Dorsolateral prefrontal cortex (tissue), 120 donors: ENCODE measurements at regions of chr2 and their contacts with region 1.

Region 1: DNA sequence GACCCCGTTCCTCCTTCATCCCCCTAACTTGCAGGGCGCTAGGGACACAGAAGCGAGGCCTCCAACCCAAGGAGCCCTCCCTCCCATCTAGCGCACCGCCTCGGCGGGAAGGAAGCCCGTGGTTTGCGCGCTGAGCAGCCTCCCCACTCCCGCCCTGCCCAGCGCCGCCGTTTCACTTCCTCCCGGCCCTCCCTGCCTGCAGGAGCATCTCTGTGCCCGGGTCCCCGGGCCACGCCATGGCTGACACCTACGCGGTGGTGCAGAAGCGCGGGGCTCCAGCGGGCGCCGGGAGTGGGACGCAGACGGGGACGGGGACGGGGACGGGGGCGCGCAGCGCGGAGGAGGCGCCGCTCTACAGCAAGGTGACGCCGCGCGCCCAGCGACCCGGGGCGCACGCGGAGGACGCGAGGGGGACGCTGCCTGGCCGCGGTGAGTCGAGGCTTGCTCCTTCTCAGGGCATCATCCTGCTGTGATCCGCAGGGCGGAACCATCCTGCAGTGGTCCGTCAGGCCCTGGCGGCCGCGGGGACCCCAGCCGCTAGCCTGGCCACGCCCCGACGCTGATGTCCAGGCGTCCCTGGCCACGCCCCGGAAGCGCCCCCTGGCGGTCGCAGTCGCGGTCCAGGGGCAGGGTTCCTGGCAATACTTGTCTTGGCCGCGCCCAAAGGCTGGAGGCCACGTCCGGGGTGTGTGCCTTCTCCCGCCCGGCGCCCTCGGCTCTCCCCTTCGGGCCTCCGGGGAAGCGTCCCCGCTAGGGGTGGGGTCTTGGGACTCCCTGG is 16.4 kb downstream of the PTPN18 start:
- DNase-seq: peak; percentile 75 to 91 (median 82)
- H3K4me3 ChIP-seq: peak overlapping the region; percentile 66 to 94 (median 87)
- H3K27ac ChIP-seq: peak overlapping the region; percentile 7 to 95 (median 85)
- H3K27me3 ChIP-seq: no peaks in the 10 kb centered on the region
- CTCF ChIP-seq: peak; percentile 75 to 97 (median 88)

Region 2: GRCh38 chr2:130332271-130333073 is 39.8 kb before region 1 on chr2:
- intact Hi-C with region 1: loop called in 1 of 2 experiments (anchors 2 kb)
- DNase-seq: peak in 9 of 10 donors; percentile 54 to 81 (median 70)
- H3K4me3 ChIP-seq: peak overlapping the region in 8 of 59 donors; percentile 3 to 31 (median 16)
- H3K27ac ChIP-seq: no peak overlapping the region
- H3K27me3 ChIP-seq: peaks cover 0 to 29% (median 2%) of the 10 kb centered on the region in 45 donors
- CTCF ChIP-seq: peak; percentile 78 to 98 (median 92)

Region 3: DNA sequence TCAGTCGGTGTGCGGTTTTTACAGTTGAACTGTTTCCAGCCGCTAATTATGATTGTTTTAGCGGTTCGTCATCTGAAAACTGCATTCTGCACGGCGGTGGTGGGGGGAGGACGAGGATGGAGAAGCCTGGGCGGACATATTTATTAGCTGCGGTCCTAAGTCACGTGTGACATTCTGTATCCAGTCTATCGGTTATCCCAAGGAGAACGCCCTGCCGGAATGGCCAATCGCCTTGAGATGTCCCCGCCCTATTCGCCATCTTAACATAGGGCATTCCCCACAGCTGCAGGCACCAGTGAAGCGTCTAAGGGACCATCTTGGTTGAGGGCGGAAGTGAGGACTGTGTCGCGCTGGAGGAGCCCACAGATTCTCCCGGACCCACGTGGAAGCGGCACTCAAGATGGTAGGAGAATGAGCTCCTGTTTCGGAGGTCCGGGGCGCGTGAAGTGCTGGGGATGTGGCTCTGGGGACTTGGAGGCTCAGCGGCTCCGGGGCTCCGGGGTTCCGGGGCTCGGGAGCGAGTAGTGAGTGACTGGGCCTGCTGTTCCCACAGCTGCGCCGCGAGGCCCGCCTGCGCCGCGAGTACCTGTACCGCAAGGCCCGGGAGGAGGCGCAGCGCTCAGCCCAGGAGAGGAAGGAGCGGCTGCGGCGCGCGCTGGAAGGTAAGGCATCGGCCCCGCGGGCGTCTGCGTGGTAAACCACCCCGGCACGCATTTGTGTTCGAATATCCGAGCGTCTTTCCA is 29.5 kb before region 1 on chr2 and contains the start of gene IMP4:
- intact Hi-C with region 1: loop called (anchors 1 to 2 kb)
- DNase-seq: peak; percentile 91 to 100 (median 99)
- H3K4me3 ChIP-seq: peak within 1 kb of the TSS; percentile 69 to 100 (median 94)
- H3K27ac ChIP-seq: peak within 1 kb of the TSS; percentile 72 to 99 (median 96)
- H3K27me3 ChIP-seq: no peaks in the 10 kb centered on the region
- CTCF ChIP-seq: peak in 36 of 56 donors; percentile 2 to 49 (median 24)
- total RNA-seq, gene IMP4: 46.3 to 91.5 (median 67.1) TPM

Region 4: DNA sequence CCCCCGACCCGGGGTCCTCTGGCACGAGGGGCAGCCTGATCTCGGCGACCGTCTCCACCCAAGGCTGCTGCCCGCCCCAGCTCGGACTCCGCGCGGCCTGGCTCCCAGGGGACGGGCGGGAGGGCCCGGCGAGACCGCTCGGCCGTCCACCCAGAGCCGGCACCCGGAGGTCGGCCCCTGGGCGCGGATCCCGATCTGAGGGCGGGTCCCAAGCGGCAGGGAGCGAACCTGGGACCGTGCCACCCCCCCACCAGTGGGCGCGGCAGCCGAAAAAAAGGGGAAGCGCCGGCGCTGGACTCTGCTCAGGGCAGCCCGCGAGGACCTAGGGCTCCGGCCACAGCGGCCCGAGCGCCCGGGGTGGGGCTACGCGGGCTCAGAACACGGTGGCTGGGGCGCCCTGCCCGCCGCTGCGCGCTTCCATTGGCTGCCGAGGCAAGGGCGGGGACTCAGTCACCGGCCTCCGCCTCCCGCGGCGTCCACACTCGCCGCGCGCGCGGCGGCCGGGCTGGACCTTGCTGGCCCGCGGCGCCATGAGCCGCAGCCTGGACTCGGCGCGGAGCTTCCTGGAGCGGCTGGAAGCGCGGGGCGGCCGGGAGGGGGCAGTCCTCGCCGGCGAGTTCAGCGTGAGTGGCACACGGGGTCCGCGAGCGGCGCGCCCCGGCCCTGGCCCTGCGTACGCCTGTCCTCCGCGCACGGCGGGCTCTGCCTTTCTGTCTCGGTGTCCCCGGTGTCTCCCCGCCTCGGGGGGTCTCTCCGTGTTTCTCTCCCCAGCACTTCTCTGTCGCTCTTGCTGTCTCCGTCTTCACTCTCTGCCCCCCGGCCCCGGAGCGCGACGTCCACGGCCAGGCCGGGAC is 16.4 kb before region 1 on chr2 and contains the start of gene PTPN18:
- intact Hi-C with region 1: loop called (anchors 1 to 2 kb)
- DNase-seq: peak; percentile 78 to 94 (median 86)
- H3K4me3 ChIP-seq: peak within 1 kb of the TSS; percentile 55 to 93 (median 83)
- H3K27ac ChIP-seq: peak within 1 kb of the TSS in 56 of 59 donors; percentile 3 to 89 (median 72)
- H3K27me3 ChIP-seq: no peaks in the 10 kb centered on the region
- CTCF ChIP-seq: peak in 55 of 56 donors; percentile 14 to 85 (median 61)
- total RNA-seq, gene PTPN18: 25.5 to 68.8 (median 49.6) TPM

Region 5: GRCh38 chr2:130391058-130391871 is 19.0 kb after region 1 on chr2:
- intact Hi-C with region 1: loop called in 1 of 2 experiments (anchors 2 kb)
- DNase-seq: peak; percentile 67 to 93 (median 87)
- H3K4me3 ChIP-seq: peak overlapping the region; percentile 53 to 90 (median 78)
- H3K27ac ChIP-seq: peak overlapping the region in 58 of 59 donors; percentile 62 to 97 (median 91)
- H3K27me3 ChIP-seq: no peaks in the 10 kb centered on the region
- CTCF ChIP-seq: peak in 11 of 56 donors; percentile 3 to 51 (median 9)